ENCODE measurements at regions of chr1 and their contacts with region 1.

Region 1: GRCh38 chr1:10065344-10065685 is 32.6 kb downstream of the UBE4B start:
- DNase-seq: no peak
- H3K4me3 ChIP-seq: no peak overlapping the region
- CTCF ChIP-seq: no peak
- POLR2A ChIP-seq: no peak

Region 2: DNA sequence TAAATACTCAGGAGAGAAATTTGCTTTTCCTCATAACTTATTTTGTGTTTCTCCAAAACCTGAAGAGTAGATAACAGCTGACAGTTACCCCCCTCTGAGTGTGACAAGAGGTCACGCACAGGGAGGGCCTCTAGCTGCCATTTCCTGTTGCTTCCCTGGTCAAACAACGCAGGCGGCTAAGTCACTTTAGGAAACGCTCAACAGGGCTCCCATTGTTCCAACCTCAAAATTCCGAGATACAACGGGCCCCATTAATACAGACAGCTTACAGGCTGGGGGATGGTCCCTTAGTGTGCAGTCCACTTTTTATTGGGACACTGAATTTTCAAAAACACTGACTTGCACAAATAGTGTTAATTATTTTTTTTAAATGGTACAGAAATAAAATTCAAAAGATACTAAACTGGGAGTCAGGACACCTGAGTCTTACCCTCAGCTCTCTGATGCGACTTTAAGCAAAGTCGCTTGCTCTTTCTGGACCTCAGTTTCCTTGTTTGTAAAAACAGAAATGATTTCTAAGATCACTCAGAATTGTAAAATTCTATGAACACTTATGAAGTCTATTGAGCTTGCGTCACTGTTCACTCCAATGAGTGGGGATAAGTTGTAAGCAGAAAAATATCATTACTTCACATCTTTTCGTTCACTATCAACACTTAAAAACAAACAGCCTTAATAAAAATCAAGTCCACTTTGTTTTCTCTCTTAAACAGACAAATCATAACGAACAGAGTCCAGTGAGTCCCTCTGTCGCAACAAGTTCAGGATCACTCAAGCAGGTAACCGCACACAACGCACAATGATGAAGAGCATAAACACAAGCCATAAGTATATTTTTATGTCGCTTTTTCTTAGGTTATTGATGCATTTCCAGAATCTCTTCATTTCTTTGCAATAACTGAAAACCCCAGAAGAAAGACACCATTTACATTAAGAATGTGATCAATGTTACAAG is 135.6 kb before region 1 on chr1:
- intact Hi-C with region 1: no loop called
- DNase-seq: peak in 1 of 2 donors; percentile 49
- H3K4me3 ChIP-seq: no peak overlapping the region
- CTCF ChIP-seq: no peak
- POLR2A ChIP-seq: no peak

Region 3: DNA sequence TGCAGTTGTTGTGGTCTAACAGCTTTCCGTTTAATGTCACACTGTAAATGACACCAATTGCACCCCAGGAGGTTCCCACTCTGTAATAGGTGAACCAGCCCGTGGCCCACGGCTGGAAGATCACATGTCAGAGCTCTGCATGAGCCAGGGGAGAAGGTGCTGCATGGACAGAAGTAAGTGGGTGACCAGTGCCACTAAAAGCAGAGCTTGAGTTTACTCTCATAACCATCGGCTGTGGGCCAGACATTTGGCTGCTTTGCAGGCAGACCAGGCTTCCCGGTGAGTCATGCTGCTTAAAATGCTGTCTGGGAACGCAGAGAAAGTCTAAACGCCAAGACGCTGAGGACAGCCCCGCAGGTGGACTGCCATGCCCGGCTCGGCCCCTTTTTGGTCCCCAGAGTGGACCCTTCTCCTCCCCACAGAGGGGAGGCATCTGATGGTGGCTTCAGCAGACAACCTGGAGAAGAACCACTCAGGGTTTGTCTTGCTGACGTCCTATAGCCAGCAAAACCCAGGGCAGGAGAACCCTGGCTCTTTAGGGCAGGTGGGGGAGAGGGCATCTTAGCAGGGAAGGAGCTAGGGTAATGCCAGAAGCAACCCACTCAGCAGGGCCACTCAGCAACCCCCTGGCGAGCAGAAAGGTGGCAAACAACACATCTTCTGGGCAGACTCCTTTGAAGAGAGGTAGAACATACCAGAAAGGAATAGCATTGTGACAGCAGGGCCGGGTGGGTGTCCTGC is 1853.6 kb after region 1 on chr1:
- intact Hi-C with region 1: loop called (anchors 10 kb)
- DNase-seq: peak in 1 of 2 donors; percentile 54
- H3K4me3 ChIP-seq: no peak overlapping the region
- CTCF ChIP-seq: no peak
- POLR2A ChIP-seq: no peak